ENCODE measurements at regions of chr13 and their contacts with region 1.

Region 1: DNA sequence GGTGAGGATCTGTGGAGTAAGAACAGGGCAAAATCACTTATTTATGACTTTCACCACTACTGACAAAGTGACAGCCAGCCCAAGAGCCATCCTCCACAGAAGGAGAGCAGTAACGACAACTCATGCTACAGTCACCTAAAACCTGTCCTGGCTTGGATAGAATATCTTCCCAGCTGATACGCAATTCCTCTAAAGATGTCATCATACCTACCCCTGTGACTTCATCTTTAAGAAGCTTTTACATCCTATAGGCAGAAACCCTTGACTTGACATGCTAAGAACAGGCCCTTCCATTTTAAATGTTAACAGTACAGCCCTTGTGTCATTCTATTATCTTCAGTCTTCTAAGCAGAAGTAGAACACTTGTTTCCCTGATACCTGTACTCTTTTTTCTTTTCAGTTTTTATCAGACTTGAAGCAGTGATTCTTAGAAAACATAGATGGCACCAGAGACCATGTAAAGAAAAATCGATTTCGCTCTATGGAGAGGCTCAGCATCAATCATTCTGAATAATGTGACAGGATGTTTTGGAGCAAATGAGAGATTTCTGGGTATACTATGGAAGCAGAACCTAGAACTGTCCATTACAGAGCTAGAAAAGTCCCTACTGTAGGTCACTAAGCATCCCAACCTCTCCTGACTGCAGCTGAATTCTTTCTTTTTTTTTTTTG is 20.1 kb downstream of the STOML3 start:
- DNase-seq: peak in 1 of 2 experiments; percentile 18
- H3K4me3 ChIP-seq: no peak overlapping the region
- H3K4me3 Mint-ChIP-seq: no peak overlapping the region
- H3K27ac Mint-ChIP-seq: peak overlapping the region; percentile 48
- H3K4me1 ChIP-seq: no peaks in the 10 kb centered on the region
- H3K4me1 Mint-ChIP-seq: peaks cover 12% of the 10 kb centered on the region
- H3K27me3 ChIP-seq: no peaks in the 10 kb centered on the region
- H3K27me3 Mint-ChIP-seq: no peaks in the 10 kb centered on the region
- CTCF ChIP-seq: peak; percentile 4 to 15

Region 2: GRCh38 chr13:39016787-39017186 is 46.3 kb after region 1 on chr13:
- CTCF ChIA-PET with region 1: no interaction called
- POLR2A ChIA-PET with region 1: no interaction called
- intact Hi-C with region 1: loop called (anchors 1 kb)
- DNase-seq: peak in 1 of 2 experiments; percentile 29
- H3K4me3 ChIP-seq: no peak overlapping the region
- H3K4me3 Mint-ChIP-seq: no peak overlapping the region
- H3K27ac Mint-ChIP-seq: no peak overlapping the region
- H3K4me1 ChIP-seq: no peaks in the 10 kb centered on the region
- H3K4me1 Mint-ChIP-seq: peaks cover 15% of the 10 kb centered on the region
- H3K27me3 ChIP-seq: no peaks in the 10 kb centered on the region
- H3K27me3 Mint-ChIP-seq: no peaks in the 10 kb centered on the region
- CTCF ChIP-seq: peak; percentile 72 to 73

Region 3: DNA sequence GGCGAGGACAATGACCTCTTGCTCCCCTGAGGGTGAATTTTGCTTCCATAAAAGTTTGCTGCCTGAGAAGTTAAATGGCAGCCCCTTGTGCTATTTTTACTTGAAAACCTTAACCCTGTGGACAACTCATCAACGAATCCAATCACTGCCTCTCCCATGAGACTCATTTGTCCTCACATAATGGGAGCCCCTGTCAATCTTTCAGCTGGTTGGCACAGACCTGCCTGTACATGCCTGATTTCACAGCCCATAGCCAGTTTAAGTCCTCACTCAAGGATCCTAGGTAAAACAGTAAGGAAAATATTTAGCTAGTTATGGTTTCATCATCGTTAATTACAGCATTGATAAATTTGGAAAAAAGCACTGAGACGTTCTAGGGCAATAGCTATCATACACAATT is 275.2 kb after region 1 on chr13:
- CTCF ChIA-PET with region 1: interaction called, 11 read pairs
- POLR2A ChIA-PET with region 1: no interaction called
- intact Hi-C with region 1: no loop called
- DNase-seq: no peak
- H3K4me3 ChIP-seq: no peak overlapping the region
- H3K4me3 Mint-ChIP-seq: no peak overlapping the region
- H3K27ac Mint-ChIP-seq: no peak overlapping the region
- H3K4me1 ChIP-seq: no peaks in the 10 kb centered on the region
- H3K4me1 Mint-ChIP-seq: peaks cover 8% of the 10 kb centered on the region
- H3K27me3 ChIP-seq: no peaks in the 10 kb centered on the region
- H3K27me3 Mint-ChIP-seq: peaks cover 7% of the 10 kb centered on the region
- CTCF ChIP-seq: no peak

Region 4: GRCh38 chr13:39263033-39263432 is 292.5 kb after region 1 on chr13:
- CTCF ChIA-PET with region 1: no interaction called
- POLR2A ChIA-PET with region 1: no interaction called
- intact Hi-C with region 1: loop called (anchors 1 kb)
- DNase-seq: peak; percentile 42 to 64
- H3K4me3 ChIP-seq: no peak overlapping the region
- H3K4me3 Mint-ChIP-seq: no peak overlapping the region
- H3K27ac Mint-ChIP-seq: no peak overlapping the region
- H3K4me1 ChIP-seq: no peaks in the 10 kb centered on the region
- H3K4me1 Mint-ChIP-seq: no peaks in the 10 kb centered on the region
- H3K27me3 ChIP-seq: no peaks in the 10 kb centered on the region
- H3K27me3 Mint-ChIP-seq: peaks cover 7% of the 10 kb centered on the region
- CTCF ChIP-seq: peak; percentile 68 to 73

Measured in Caco-2 (cell line).